ENCODE measurements at regions of chr11 and their contacts with region 1.

Region 1: GRCh38 chr11:13016415-13016814 is 7.3 kb downstream of the RASSF10 start:
- DNase-seq: no peak
- H3K4me3 ChIP-seq: no peak overlapping the region
- H3K4me3 Mint-ChIP-seq: no peak overlapping the region
- H3K27ac Mint-ChIP-seq: no peak overlapping the region
- H3K4me1 ChIP-seq: peaks cover 13% of the 10 kb centered on the region; the same call in 1 of the 2 replicates
- H3K4me1 Mint-ChIP-seq: peaks cover 10% of the 10 kb centered on the region
- H3K27me3 ChIP-seq: no peaks in the 10 kb centered on the region
- H3K27me3 Mint-ChIP-seq: peaks cover 16% of the 10 kb centered on the region
- CTCF ChIP-seq: no peak

Region 2: DNA sequence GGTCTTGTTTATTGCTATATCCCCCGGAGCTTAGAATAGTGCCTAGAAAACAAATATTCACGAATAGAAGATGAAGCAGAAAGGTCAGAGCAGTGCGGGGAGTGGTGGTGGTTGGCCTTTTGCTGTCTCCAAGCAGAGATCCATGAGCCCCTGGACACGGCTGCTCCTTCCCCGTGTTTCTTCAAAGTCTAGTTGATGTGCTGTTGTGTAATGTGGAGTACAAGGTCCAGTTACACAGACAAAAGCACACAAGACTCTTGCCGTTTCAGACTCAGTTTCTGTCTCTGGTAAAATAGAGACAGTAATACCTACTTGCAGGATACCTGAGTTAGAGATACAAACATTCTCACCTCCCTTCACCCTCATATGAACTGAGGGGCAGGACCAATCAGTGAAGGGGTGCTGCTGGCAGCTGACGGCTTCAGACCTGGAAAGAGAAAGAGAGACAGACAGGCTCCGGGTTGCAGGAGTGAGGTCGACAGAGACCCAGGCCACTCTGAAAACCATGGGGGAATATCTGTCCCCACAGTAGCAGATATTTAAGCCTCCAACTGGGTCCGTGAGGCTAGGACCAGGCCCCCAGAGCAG is 48.9 kb after region 1 on chr11:
- CTCF ChIA-PET with region 1: no interaction called
- POLR2A ChIA-PET with region 1: no interaction called
- intact Hi-C with region 1: loop called (anchors 5 kb)
- DNase-seq: peak in 1 of 2 experiments; percentile 44
- H3K4me3 ChIP-seq: no peak overlapping the region
- H3K4me3 Mint-ChIP-seq: peak overlapping the region; percentile 17
- H3K27ac Mint-ChIP-seq: peak overlapping the region; percentile 42
- H3K4me1 ChIP-seq: peaks cover 21% of the 10 kb centered on the region
- H3K4me1 Mint-ChIP-seq: peaks cover 16% of the 10 kb centered on the region
- H3K27me3 ChIP-seq: no peaks in the 10 kb centered on the region
- H3K27me3 Mint-ChIP-seq: no peaks in the 10 kb centered on the region
- CTCF ChIP-seq: no peak

Region 3: GRCh38 chr11:13152736-13153533 is 136.5 kb after region 1 on chr11:
- CTCF ChIA-PET with region 1: no interaction called
- POLR2A ChIA-PET with region 1: no interaction called
- intact Hi-C with region 1: loop called (anchors 5 kb)
- DNase-seq: peak in 1 of 2 experiments; percentile 39
- H3K4me3 ChIP-seq: no peak overlapping the region
- H3K4me3 Mint-ChIP-seq: no peak overlapping the region
- H3K27ac Mint-ChIP-seq: no peak overlapping the region
- H3K4me1 ChIP-seq: peaks cover 9% of the 10 kb centered on the region; the same call in 1 of the 2 replicates
- H3K4me1 Mint-ChIP-seq: peaks cover 17% of the 10 kb centered on the region
- H3K27me3 ChIP-seq: no peaks in the 10 kb centered on the region
- H3K27me3 Mint-ChIP-seq: no peaks in the 10 kb centered on the region
- CTCF ChIP-seq: peak; percentile 26 to 38

Region 4: DNA sequence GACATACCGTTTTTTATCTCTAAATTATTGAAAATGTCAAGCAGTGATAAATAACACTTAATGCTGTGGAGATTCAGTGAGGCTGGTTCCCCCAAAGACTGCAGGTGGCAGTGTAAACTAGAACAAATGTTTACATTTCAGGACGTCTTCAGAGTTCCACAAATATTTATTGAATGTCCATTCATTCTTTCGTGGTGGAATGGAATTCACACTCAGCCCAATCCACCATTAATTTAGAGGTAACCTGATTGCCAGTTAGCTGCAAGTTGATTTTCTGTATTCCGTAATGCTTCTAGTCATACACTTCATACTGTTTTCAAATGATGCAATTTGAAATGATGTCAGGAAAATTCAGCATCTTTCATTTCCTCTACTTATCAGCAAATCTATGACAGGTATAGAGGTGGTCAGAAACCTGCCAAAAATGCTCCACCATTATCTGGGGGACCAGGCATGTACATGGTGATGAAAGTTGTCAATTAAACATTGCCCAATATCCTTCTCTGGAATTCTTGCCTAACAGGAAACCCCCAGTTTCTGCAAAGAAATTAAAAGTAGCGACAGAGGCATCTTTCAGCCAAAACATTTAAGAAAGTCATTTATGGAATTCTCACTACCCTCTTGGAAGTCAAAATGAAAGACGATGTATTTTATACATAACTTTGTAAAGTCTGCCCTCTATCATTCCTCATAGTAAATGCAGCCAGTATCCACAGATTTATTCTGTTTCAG is 166.8 kb after region 1 on chr11:
- CTCF ChIA-PET with region 1: no interaction called
- POLR2A ChIA-PET with region 1: no interaction called
- intact Hi-C with region 1: loop called (anchors 1 kb)
- DNase-seq: peak in 1 of 2 experiments; percentile 22
- H3K4me3 ChIP-seq: no peak overlapping the region
- H3K4me3 Mint-ChIP-seq: peak overlapping the region; percentile 10
- H3K27ac Mint-ChIP-seq: no peak overlapping the region
- H3K4me1 ChIP-seq: peaks cover 6% of the 10 kb centered on the region
- H3K4me1 Mint-ChIP-seq: no peaks in the 10 kb centered on the region
- H3K27me3 ChIP-seq: no peaks in the 10 kb centered on the region
- H3K27me3 Mint-ChIP-seq: peaks cover 2% of the 10 kb centered on the region
- CTCF ChIP-seq: peak; percentile 41 to 53

Measured in Caco-2 (cell line).